Ascending aorta (tissue), 2 donors: ENCODE measurements at regions of chr15 and their contacts with region 1.

Region 1: GRCh38 chr15:70165716-70166284 is 68.1 kb upstream of the TLE3 start:
- DNase-seq: peak in 1 of 2 donors; percentile 77
- H3K4me3 ChIP-seq: no peak overlapping the region
- H3K27ac ChIP-seq: peak overlapping the region; percentile 60 to 69
- H3K4me1 ChIP-seq: peaks cover 3 to 26% of the 10 kb centered on the region in 2 donors
- H3K27me3 ChIP-seq: no peaks in the 10 kb centered on the region
- CTCF ChIP-seq: no peak

Region 2: GRCh38 chr15:70182857-70183695 is 17.3 kb after region 1 on chr15:
- intact Hi-C with region 1: loop called (anchors 2 kb)
- DNase-seq: no peak
- H3K4me3 ChIP-seq: no peak overlapping the region
- H3K27ac ChIP-seq: no peak overlapping the region
- H3K4me1 ChIP-seq: peaks cover 0 to 7% of the 10 kb centered on the region in 2 donors
- H3K27me3 ChIP-seq: no peaks in the 10 kb centered on the region
- CTCF ChIP-seq: no peak

Region 3: DNA sequence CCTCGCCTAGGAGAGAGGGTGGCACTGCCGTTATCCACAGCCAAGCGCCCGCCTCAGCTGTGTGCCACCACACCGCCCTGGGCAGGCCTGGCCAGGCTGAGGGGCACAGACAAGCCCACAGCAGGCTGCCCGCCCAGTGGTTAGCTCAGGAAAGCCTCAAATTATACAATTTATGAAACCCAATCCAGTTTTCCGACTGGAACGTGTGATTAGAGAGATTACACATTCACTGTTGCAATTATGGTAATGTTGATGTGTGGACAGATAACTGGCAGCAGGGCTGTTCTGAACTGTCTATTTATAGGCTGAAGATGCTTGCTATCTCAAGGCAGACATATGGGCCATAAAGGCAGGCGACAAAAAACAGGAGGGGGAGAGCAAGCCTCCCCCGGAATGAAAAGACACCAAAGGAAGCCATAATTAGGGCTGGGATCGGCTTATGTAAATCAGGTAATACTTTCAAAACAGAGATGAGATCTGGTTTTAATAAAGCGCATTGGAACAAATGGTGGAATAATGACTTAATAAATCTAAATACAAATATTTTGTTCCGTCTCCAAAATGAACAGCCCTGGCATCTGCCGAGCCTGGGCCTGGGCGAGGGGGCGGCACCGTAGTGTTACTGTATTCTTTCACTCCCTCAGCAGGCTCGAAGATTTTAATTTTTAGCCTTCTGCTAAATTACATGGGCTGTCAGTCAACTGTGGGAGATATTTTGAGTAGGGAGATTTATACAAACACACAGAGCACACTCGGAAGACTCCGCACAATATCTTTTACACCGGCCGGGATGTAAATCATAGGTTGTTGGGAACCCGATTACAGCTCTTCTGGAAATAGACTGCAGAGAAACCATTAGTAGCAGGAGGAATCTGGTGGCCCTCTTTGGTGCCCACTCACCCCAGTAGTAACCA is 35.0 kb after region 1 on chr15:
- intact Hi-C with region 1: no loop called
- DNase-seq: no peak
- H3K4me3 ChIP-seq: no peak overlapping the region
- H3K27ac ChIP-seq: no peak overlapping the region
- H3K4me1 ChIP-seq: peaks cover 4 to 9% of the 10 kb centered on the region in 2 donors
- H3K27me3 ChIP-seq: no peaks in the 10 kb centered on the region
- CTCF ChIP-seq: no peak